Motor neuron (in vitro differentiated cells): ENCODE measurements at regions of chr2 and their contacts with region 1.

Region 1: GRCh38 chr2:233251306-233252116 is at the start of gene ATG16L1:
- ATAC-seq: peak; percentile 95 to 99 (median 98)
- H3K4me3 ChIP-seq: peak within 1 kb of the TSS; percentile 77 to 95 (median 93)
- H3K27ac ChIP-seq: peak within 1 kb of the TSS; percentile 65 to 70
- H3K4me1 ChIP-seq: peaks cover 4 to 6% of the 10 kb centered on the region in 2 donors
- total RNA-seq, gene ATG16L1: 18.0 to 48.0 (median 25.9) TPM

Region 2: GRCh38 chr2:232611551-232612218 is 639.8 kb before region 1 on chr2:
- in situ Hi-C with region 1: loop called in 3 of 9 experiments (anchors 25 kb)
- ATAC-seq: peak in 6 of 8 experiments; percentile 36 to 97 (median 66)
- H3K4me3 ChIP-seq: no peak overlapping the region
- H3K27ac ChIP-seq: no peak overlapping the region
- H3K4me1 ChIP-seq: no peaks in the 10 kb centered on the region

Region 3: GRCh38 chr2:232854082-232854481 is 397.4 kb before region 1 on chr2:
- in situ Hi-C with region 1: loop called in 7 of 9 experiments (anchors 10 to 25 kb)
- ATAC-seq: peak in 2 of 8 experiments; percentile 52
- H3K4me3 ChIP-seq: no peak overlapping the region
- H3K27ac ChIP-seq: no peak overlapping the region
- H3K4me1 ChIP-seq: no peaks in the 10 kb centered on the region